GM12878 (cell line): ENCODE measurements at regions of chr6 and their contacts with region 1.

Region 1: GRCh38 chr6:139028658-139029469 is at the start of gene ABRACL:
- DNase-seq: peak; percentile 45
- ATAC-seq: peak; percentile 80
- H3K4me3 ChIP-seq: peak within 1 kb of the TSS; percentile 93
- H3K27ac ChIP-seq: peak within 1 kb of the TSS; percentile 88
- H3K4me1 ChIP-seq: peaks cover 6% of the 10 kb centered on the region
- H3K27me3 ChIP-seq: no peaks in the 10 kb centered on the region
- CTCF ChIP-seq: no peak
- EP300 ChIP-seq: no peak
- POLR2A ChIP-seq: peak; percentile 93
- RAD21 ChIP-seq: 0 out of 2 replicates have a peak, but pooled peaks have one; percentile 8
- polyA plus RNA-seq, gene ABRACL: 636 to 647 TPM

Region 2: DNA sequence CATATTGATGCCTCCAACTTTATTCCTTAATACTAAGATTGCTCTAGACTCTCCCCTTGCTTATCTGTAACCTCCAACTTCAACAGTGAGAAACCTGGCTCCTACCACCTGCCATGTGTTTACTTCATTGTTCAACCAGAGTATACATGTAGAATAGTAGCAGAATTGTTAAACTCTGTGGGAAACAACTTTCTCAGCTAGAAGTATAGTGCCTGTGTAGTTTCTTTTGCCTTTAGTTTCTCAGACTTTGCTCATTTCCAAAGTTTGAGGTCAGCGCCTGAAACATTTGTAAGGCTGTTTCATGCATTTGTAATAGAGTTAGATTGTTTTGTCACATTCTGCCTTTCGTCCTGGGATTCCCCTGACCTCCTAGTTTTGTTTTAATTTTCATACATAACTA is 71.1 kb after region 1 on chr6:
- CTCF ChIA-PET with region 1: interaction called, 3 read pairs
- POLR2A ChIA-PET with region 1: no interaction called
- RAD21 ChIA-PET with region 1: interaction called, 3 read pairs
- SMC1A ChIA-PET with region 1: interaction called, 4 read pairs
- in situ Hi-C with region 1: no loop called
- intact Hi-C with region 1: loop called (anchors 5 kb)
- DNase-seq: peak; percentile 57
- ATAC-seq: peak; percentile 95
- H3K4me3 ChIP-seq: no peak overlapping the region
- H3K27ac ChIP-seq: peak overlapping the region; percentile 40; the same call in 1 of the 2 replicates
- H3K4me1 ChIP-seq: peaks cover 12% of the 10 kb centered on the region
- H3K27me3 ChIP-seq: no peaks in the 10 kb centered on the region
- CTCF ChIP-seq: no peak
- EP300 ChIP-seq: peak in 1 of 2 experiments; percentile 38; a peak in 1 of 4 replicates
- POLR2A ChIP-seq: no peak
- RAD21 ChIP-seq: 0 out of 2 replicates have a peak, but pooled peaks have one; percentile 6